ENCODE measurements at regions of chr1 and their contacts with region 1.

Region 1: DNA sequence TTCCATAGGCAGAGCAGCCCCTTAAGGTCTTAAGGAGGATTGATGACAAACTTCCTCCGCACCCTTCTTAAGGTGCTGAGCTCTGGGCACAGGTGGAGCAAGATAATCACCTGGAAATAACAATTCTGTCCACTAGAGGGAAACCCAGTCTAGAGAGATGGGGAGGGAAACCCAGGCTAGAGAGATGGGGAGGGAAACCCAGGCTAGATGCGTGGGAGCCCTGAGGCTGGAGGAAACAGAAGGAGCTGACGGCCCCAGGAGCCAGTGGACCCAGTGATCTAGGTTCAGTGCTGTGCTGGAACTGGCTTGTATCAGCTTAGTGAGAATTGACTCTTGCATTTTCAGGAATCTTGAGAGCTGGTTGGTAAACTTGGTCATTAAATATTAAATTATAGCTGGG is 17.8 kb upstream of the MYCL start:
- DNase-seq: peak; percentile 53 to 71
- H3K4me3 ChIP-seq: no peak overlapping the region
- H3K4me3 Mint-ChIP-seq: no peak overlapping the region
- H3K27ac Mint-ChIP-seq: no peak overlapping the region
- H3K4me1 ChIP-seq: no peaks in the 10 kb centered on the region
- H3K4me1 Mint-ChIP-seq: no peaks in the 10 kb centered on the region
- H3K27me3 ChIP-seq: no peaks in the 10 kb centered on the region
- H3K27me3 Mint-ChIP-seq: no peaks in the 10 kb centered on the region
- CTCF ChIP-seq: peak; percentile 48 to 66

Region 2: DNA sequence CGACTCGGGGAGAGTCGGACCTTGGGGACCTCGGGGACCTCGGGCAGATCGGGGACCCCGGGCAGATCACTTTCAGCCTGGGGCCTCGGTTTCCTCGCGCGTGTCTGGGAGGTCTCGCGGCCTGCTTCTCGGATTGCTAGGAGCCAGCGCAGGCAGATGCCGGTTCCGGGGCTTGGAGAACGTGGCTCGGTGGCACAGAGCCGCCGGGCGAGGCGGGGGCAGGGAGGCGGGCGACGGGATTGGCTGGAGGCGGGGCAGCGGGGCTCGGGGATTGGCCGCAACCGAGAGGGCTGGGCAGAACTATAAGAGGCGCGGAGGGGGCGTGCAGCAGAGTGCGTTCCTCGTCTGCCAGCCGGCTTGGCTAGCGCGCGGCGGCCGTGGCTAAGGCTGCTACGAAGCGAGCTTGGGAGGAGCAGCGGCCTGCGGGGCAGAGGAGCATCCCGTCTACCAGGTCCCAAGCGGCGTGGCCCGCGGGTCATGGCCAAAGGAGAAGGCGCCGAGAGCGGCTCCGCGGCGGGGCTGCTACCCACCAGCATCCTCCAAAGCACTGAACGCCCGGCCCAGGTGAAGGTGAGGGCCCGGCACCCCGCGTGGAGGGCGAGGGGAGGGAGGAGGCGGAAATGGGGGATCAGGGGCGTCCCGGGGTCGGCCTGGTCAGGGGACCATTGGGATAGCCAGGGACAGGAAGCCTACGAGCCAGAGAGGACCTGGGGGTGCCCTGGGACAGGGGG is 35.4 kb after region 1 on chr1 and contains the start of gene MFSD2A:
- CTCF ChIA-PET with region 1: interaction called, 14 read pairs
- POLR2A ChIA-PET with region 1: no interaction called
- intact Hi-C with region 1: no loop called
- DNase-seq: peak; percentile 85 to 86
- H3K4me3 ChIP-seq: peak within 1 kb of the TSS; percentile 41
- H3K4me3 Mint-ChIP-seq: peak within 1 kb of the TSS; percentile 78
- H3K27ac Mint-ChIP-seq: no peak within 1 kb of the TSS
- H3K4me1 ChIP-seq: no peaks in the 10 kb centered on the region
- H3K4me1 Mint-ChIP-seq: no peaks in the 10 kb centered on the region
- H3K27me3 ChIP-seq: no peaks in the 10 kb centered on the region
- H3K27me3 Mint-ChIP-seq: peaks cover 2% of the 10 kb centered on the region
- CTCF ChIP-seq: no peak
- total RNA-seq, gene MFSD2A: 2.2 TPM in 2 replicates

Region 3: DNA sequence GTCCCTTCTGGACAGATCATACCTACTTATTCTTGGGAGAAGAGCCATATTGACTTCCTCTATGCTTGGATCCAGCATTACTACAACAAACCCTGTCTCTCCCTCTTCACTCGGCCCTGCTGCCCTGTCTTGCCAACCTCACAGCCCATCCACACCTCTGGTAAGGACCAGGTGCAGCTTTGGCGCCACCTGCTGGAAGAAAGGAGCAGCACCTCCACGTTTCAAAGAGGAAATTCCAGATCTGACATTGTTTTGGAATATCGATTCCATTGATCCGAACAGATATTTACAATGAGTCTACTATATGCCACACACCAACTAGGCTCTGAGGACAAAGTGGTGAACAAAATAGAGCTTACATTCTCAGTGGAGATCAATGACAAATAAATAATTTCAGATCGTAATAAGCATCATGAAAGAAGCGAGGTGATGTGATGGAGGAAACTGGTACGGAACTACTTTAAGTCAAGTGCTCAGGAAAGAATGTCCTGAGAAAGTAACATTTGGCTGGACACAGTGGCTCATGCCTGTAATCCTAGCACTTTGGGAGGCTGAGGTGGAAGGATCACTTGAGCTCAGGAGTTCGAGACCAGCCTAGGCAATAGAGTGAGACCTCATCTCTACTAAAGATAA is 54.1 kb after region 1 on chr1:
- CTCF ChIA-PET with region 1: interaction called, 44 read pairs
- POLR2A ChIA-PET with region 1: interaction called, 4 read pairs
- intact Hi-C with region 1: loop called (anchors 1 kb)
- DNase-seq: peak; percentile 65 to 67
- H3K4me3 ChIP-seq: no peak overlapping the region
- H3K4me3 Mint-ChIP-seq: no peak overlapping the region
- H3K27ac Mint-ChIP-seq: no peak overlapping the region
- H3K4me1 ChIP-seq: peaks cover 3% of the 10 kb centered on the region; the same call in 1 of the 2 replicates
- H3K4me1 Mint-ChIP-seq: peaks cover 7% of the 10 kb centered on the region
- H3K27me3 ChIP-seq: no peaks in the 10 kb centered on the region
- H3K27me3 Mint-ChIP-seq: no peaks in the 10 kb centered on the region
- CTCF ChIP-seq: peak; percentile 76 to 80

Region 4: DNA sequence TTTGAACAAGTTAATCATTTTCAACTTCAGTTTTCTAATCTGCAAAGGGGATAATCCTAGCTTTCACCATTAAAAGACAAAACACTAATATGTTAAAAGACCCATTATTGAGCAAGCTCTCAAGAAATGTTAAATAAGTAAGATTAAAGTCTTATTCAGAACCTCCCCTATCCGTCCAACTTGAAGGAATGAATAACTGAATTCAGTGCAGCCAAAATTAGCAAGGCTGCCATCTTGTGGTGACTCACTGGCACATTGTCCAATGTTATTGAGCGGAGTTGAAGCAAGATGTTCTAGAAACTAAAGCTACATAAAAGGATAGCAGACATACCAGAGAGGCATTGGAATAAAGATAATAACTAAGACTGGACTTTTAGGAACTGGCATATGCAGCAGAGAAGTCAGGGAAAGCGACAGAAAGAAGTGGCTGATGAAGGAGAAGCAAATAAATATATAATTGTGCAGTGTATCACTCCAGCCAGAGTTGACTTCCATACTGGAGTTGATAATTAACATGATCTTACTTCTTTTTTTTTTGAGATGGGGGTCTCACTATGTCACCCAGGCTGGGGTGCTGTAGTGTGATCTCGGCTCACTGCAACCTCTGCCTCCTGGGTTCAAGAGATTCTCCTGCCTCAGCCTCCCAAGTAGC is 112.8 kb after region 1 on chr1:
- CTCF ChIA-PET with region 1: interaction called, 16 read pairs
- POLR2A ChIA-PET with region 1: interaction called, 3 read pairs
- intact Hi-C with region 1: loop called (anchors 1 kb)
- DNase-seq: peak; percentile 37 to 40
- H3K4me3 ChIP-seq: no peak overlapping the region
- H3K4me3 Mint-ChIP-seq: no peak overlapping the region
- H3K27ac Mint-ChIP-seq: no peak overlapping the region
- H3K4me1 ChIP-seq: peaks cover 3% of the 10 kb centered on the region; the same call in 1 of the 2 replicates
- H3K4me1 Mint-ChIP-seq: peaks cover 13% of the 10 kb centered on the region
- H3K27me3 ChIP-seq: no peaks in the 10 kb centered on the region
- H3K27me3 Mint-ChIP-seq: no peaks in the 10 kb centered on the region
- CTCF ChIP-seq: peak; percentile 48 to 52